ENCODE measurements at regions of chr12 and their contacts with region 1.

Region 1: GRCh38 chr12:15757553-15758265 is 31.5 kb downstream of the EPS8 start:
- DNase-seq: peak; percentile 92
- H3K4me3 Mint-ChIP-seq: no peak overlapping the region
- H3K27ac Mint-ChIP-seq: peak overlapping the region; percentile 63
- H3K4me1 Mint-ChIP-seq: peaks cover 49% of the 10 kb centered on the region
- H3K27me3 Mint-ChIP-seq: no peaks in the 10 kb centered on the region
- CTCF ChIP-seq: no peak

Region 2: GRCh38 chr12:15662303-15662980 is 95.3 kb before region 1 on chr12:
- CTCF ChIA-PET with region 1: no interaction called
- POLR2A ChIA-PET with region 1: interaction called, 10 read pairs
- intact Hi-C with region 1: no loop called
- DNase-seq: peak; percentile 89
- H3K4me3 Mint-ChIP-seq: peak overlapping the region; percentile 55
- H3K27ac Mint-ChIP-seq: peak overlapping the region; percentile 97
- H3K4me1 Mint-ChIP-seq: peaks cover 12% of the 10 kb centered on the region
- H3K27me3 Mint-ChIP-seq: no peaks in the 10 kb centered on the region
- CTCF ChIP-seq: no peak

Region 3: DNA sequence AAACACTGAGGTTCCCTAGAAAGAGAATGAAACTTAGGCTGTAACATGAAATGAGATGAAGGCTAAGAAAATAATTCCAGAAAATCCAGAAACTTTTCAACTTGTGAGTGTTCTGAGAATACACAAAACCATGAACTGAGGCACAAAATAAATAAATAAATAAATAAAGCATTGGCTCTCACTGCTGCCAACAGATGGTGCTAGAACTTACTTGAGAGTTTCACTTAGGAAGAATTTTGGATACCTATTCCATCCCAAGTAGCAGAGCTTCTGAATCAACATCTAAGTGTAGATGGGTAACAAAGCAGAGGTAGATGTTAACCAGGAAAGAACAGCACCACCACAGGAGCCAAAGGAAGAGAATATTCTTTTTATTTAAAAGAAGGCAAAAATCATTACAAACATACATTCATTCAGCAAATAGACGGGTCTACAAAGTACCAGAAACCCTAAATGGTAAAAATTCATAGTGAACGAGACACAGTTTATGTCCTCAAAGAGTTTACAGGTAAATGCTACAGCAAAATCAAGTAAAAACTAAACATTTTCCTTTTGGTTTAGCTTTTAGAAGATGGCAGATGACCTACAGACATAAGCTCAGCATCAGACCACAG is 14.8 kb after region 1 on chr12:
- CTCF ChIA-PET with region 1: interaction called, 12 read pairs
- POLR2A ChIA-PET with region 1: interaction called, 3 read pairs
- intact Hi-C with region 1: no loop called
- DNase-seq: peak; percentile 55
- H3K4me3 Mint-ChIP-seq: no peak overlapping the region
- H3K27ac Mint-ChIP-seq: no peak overlapping the region
- H3K4me1 Mint-ChIP-seq: peaks cover 44% of the 10 kb centered on the region
- H3K27me3 Mint-ChIP-seq: no peaks in the 10 kb centered on the region
- CTCF ChIP-seq: peak; percentile 42